K562 (cell line): ENCODE measurements at regions of chr7 and their contacts with region 1.

Region 1: GRCh38 chr7:103065667-103066066 is 8.9 kb downstream of the FBXL13 start:
- DNase-seq: peak; percentile 34 to 69 (median 48)
- ATAC-seq: peak; percentile 82
- H3K4me3 ChIP-seq: no peak overlapping the region
- H3K27ac ChIP-seq: no peak overlapping the region
- H3K4me1 ChIP-seq: no peaks in the 10 kb centered on the region
- H3K27me3 ChIP-seq: no peaks in the 10 kb centered on the region
- CTCF ChIP-seq: peak; percentile 65 to 83 (median 71)
- EP300 ChIP-seq: no peak
- POLR2A ChIP-seq: no peak
- RAD21 ChIP-seq: peak; percentile 39 to 74; a peak in 3 of 4 replicates

Region 2: GRCh38 chr7:103396471-103396870 is 330.8 kb after region 1 on chr7:
- CTCF ChIA-PET with region 1: no interaction called
- POLR2A ChIA-PET with region 1: no interaction called
- in situ Hi-C with region 1: no loop called
- intact Hi-C with region 1: loop called (anchors 10 kb)
- DNase-seq: no peak
- ATAC-seq: no peak
- H3K4me3 ChIP-seq: no peak overlapping the region
- H3K27ac ChIP-seq: no peak overlapping the region
- H3K4me1 ChIP-seq: peaks cover 3 to 4% of the 10 kb centered on the region in 2 experiments; a peak in 2 of 5 replicates
- H3K27me3 ChIP-seq: no peaks in the 10 kb centered on the region
- CTCF ChIP-seq: no peak
- EP300 ChIP-seq: no peak
- POLR2A ChIP-seq: no peak
- RAD21 ChIP-seq: no peak